H1 (cell line): ENCODE measurements at regions of chr20 and their contacts with region 1.

Region 1: DNA sequence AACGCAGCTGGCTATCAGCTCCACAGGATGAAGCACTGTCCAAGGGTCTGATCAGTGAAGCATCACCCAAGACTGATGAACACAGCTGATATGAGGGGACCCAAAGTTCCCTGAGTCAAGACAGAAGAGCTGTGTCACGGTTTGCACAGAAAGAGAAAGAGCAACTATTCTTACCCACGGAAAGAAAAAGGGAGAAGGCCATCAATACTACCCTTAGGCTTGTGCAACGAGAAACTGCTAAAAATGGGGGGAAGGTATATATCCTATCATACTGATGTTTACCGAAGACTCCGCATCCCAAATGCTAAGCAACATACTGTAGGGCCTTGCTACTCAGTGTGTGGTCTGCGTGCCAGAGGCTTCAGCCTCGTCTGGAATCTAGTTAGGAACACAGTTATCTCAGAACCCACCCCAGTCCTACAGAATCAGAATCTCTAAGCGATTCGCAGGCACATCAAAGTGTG is 665 bp downstream of the FASTKD5 start:
- DNase-seq: no peak
- H3K4me3 ChIP-seq: peak overlapping the region; percentile 84 to 90 (median 90)
- H3K27ac ChIP-seq: peak overlapping the region; percentile 77
- H3K4me1 ChIP-seq: peaks cover 2 to 8% (median 3%) of the 10 kb centered on the region in 4 experiments; a peak in 3 of 7 replicates
- H3K27me3 ChIP-seq: no peaks in the 10 kb centered on the region
- CTCF ChIP-seq: no peak
- EP300 ChIP-seq: no peak
- POLR2A ChIP-seq: no peak; a peak in 1 of 3 replicates
- RAD21 ChIP-seq: no peak

Region 2: DNA sequence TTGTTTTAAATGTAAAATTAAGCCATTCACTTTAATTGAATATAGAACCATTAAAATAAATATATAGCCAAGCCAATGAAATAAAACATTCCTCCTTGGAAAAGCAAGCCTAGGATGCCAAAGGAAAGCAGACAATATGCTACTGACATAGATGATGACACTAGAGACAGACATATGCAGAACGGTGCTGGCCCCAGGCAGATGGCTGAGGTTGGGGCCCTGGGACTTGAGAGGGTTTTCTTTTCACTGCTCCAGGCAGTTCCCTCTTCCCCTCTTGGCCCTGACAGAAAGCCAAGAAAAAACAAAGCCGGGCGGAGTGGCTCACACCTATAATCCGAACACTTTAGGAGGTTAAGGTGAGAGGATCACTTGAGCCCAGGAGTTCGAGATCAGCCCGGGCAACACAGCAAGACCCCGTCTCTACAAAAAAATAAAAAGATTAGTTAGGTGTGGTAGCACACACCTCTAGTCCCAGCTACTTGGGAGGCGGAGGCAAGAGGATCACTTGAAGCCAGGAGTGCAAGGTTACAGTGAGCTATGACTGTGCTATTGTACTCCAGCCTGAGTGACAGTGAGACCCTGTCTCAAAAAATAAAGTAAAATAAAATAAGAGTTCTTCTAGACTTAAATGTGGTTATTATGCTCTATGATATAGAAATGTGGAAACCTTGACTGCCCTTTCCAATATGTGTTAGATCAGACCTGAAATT is 30.6 kb before region 1 on chr20:
- CTCF ChIA-PET with region 1: no interaction called
- POLR2A ChIA-PET with region 1: no interaction called
- DNase-seq: no peak
- H3K4me3 ChIP-seq: no peak overlapping the region
- H3K27ac ChIP-seq: no peak overlapping the region
- H3K4me1 ChIP-seq: no peaks in the 10 kb centered on the region
- H3K27me3 ChIP-seq: no peaks in the 10 kb centered on the region
- CTCF ChIP-seq: no peak
- EP300 ChIP-seq: no peak
- POLR2A ChIP-seq: no peak
- RAD21 ChIP-seq: no peak

Region 3: DNA sequence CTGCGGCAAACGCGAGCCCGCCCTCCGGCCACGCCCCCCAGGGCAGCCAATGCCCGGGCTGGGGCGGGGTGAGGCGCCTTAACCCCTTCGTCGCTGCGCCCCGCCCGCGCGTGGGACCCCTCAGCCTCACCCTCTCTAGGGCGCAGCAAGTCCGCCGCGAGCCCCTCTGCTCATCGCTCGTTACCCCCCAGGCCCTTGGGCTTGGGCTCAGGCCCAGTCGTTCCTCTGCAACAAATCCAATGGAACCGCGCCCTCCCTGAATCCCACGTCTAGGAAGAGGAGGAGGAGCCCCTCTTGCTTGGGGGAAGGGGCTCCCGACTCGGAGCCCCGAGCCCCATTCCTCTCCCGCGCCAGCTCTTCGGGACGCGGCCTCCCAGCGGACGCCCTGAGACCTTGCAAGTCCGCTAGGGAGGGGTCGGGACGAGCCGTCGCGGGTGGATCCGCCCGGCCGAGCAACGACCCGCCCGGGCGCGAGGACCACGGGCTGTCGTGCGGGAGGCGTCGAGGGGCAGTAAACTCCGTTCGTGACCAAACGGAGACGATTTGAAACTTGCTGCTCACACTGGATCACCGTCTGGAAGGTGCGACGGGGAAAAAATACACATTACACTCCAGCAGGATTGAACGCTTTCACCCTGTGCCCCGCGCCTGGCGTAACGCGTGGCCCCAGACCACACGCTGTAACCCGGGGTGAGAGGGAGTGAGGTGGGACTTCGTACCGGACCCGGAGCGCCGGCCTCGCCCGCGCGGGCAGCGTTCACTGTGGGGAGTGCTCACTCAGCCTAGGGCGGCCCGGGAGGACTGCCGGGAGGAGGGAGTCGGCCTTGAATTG is 14.8 kb after region 1 on chr20:
- CTCF ChIA-PET with region 1: interaction called, 3 read pairs
- POLR2A ChIA-PET with region 1: interaction called, 19 read pairs
- DNase-seq: peak; percentile 71 to 98
- H3K4me3 ChIP-seq: peak overlapping the region; percentile 83 to 95 (median 91)
- H3K27ac ChIP-seq: peak overlapping the region; percentile 61
- H3K4me1 ChIP-seq: peaks cover 4 to 21% (median 14%) of the 10 kb centered on the region in 4 experiments
- H3K27me3 ChIP-seq: no peaks in the 10 kb centered on the region
- CTCF ChIP-seq: peak; percentile 21 to 33 (median 30)
- EP300 ChIP-seq: no peak
- POLR2A ChIP-seq: 0 out of 3 replicates have a peak, but pooled peaks of 1 of the 2 experiments have one; percentile 19
- RAD21 ChIP-seq: no peak; a peak in 1 of 4 replicates